Mucosa of descending colon (tissue), 3 donors: ENCODE measurements at regions of chr3 and their contacts with region 1.

Region 1: GRCh38 chr3:134308350-134308891 is 57.8 kb upstream of the RYK start:
- DNase-seq: peak; percentile 74 to 93 (median 85)
- ATAC-seq: peak; percentile 82
- H3K4me3 ChIP-seq: no peak overlapping the region
- H3K4me1 ChIP-seq: peaks cover 17% of the 10 kb centered on the region
- CTCF ChIP-seq: peak; percentile 95

Region 2: GRCh38 chr3:134232151-134232550 is 76.3 kb before region 1 on chr3:
- intact Hi-C with region 1: no loop called
- DNase-seq: no peak
- ATAC-seq: peak; percentile 41
- H3K4me3 ChIP-seq: no peak overlapping the region
- H3K4me1 ChIP-seq: peaks cover 5% of the 10 kb centered on the region
- CTCF ChIP-seq: no peak

Region 3: DNA sequence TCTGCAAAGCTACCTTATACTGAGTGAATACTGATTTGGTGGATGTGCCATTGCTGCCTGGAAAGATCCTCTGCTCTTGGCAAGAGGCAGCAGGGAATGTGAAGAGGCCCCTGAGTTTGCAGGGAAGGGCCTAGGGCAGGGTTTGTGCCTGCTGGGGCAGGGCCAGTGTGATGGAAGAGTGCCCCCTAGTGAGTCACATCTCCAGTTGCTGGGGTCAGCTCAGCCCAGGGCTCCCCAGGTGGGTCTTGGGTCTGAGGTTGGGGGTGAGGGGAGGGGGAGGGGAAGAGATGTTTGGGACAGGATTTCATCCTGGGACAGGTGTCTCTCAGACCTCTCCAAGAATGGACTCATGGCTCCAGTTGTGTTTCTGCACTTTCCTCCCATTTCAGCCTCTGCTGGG is 70.0 kb after region 1 on chr3:
- intact Hi-C with region 1: loop called (anchors 2 to 5 kb)
- DNase-seq: peak in 2 of 3 donors; percentile 68 to 69
- ATAC-seq: no peak
- H3K4me3 ChIP-seq: no peak overlapping the region
- H3K4me1 ChIP-seq: peaks cover 18% of the 10 kb centered on the region
- CTCF ChIP-seq: peak; percentile 36

Region 4: DNA sequence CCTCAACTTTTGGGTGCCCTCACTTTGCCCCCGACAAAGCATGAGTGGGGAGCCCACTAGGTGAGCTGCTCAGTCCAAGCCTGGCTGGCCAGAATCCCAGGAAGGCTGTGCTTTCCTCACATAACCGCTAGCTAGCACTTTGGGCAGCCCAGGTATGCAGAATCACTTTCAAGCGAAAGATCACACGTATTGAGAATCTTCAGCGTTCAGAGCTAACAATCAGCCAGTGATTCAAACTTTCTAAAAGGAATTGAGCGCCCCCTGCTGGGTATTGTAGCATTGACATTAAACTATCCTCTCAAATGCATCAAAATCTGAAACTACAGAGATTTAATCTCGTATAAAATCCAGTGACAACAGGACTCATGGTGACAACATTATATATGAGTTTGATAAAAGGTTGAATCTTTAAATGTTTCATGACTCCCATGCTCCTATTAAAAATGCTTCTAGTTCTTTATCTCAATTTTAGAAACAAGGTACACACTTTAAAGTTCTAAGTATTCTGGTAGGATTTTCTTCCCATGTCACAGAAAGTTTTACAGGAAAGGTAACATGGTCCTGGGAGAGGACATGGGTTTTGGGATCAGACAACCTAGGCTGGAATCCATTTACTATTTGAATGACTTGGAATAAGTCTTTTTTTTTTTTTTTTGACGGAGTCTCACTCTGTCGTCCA is 165.6 kb after region 1 on chr3:
- intact Hi-C with region 1: loop called (anchors 2 to 5 kb)
- DNase-seq: peak in 2 of 3 donors; percentile 33 to 96
- ATAC-seq: peak; percentile 85
- H3K4me3 ChIP-seq: no peak overlapping the region
- H3K4me1 ChIP-seq: no peaks in the 10 kb centered on the region
- CTCF ChIP-seq: peak; percentile 44